ENCODE measurements at regions of chr7 and their contacts with region 1.

Region 1: DNA sequence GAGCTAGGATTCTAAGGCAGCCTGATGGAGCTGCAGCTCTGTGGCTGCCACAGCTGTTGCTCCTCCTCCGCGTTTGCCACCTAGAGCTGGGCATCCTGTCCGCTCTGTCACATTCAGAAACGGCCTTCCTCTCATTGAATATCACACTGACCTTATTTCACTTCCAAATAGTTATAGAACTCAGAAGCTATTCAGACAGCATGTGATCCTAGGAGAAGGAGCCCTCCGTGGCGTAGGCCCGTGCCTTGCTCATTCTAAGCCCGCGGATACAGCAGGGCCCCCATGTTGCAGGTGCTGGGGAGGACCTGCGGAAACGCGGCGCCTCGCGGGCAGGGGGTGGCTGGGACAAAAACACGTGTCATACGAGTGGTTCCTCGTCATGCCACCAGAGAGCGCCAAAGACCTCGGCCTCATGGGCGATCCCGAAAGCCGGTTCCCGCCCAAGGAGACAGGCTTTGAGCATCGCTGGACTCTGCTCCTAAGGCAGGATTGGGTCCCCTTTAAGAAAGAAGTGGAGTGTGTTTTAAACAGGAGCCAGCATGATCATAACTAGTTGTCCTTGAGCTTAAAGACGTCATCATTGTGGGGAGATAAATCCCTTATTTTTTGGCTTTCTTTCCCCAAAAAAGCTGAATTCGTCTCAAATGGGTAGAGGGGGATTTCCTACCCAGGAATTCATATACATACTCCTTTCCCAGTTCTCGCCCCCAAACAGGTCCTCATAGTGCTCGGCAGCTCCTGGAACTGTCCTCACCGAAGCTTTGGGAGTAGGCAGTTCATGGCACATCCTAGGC is 17.9 kb upstream of the FIGNL1 start:
- DNase-seq: peak; percentile 72 to 78 (median 74)
- H3K4me3 ChIP-seq: peak overlapping the region in 1 of 2 donors; percentile 6
- H3K4me3 Mint-ChIP-seq: peak overlapping the region; percentile 18 to 79 (median 64)
- H3K27ac ChIP-seq: no peak overlapping the region
- H3K27ac Mint-ChIP-seq: peak overlapping the region in 5 of 7 donors; percentile 55 to 88 (median 81)
- H3K4me1 ChIP-seq: peaks cover 10% of the 10 kb centered on the region
- H3K4me1 Mint-ChIP-seq: peaks cover 2 to 14% (median 9%) of the 10 kb centered on the region in 4 donors
- H3K27me3 ChIP-seq: no peaks in the 10 kb centered on the region
- H3K27me3 Mint-ChIP-seq: peaks cover 0 to 3% of the 10 kb centered on the region in 2 donors

Region 2: GRCh38 chr7:49852619-49853462 is 615.2 kb before region 1 on chr7:
- CTCF ChIA-PET with region 1: no interaction called
- POLR2A ChIA-PET with region 1: no interaction called
- intact Hi-C with region 1: no loop called
- DNase-seq: no peak
- H3K4me3 ChIP-seq: no peak overlapping the region
- H3K4me3 Mint-ChIP-seq: no peak overlapping the region
- H3K27ac ChIP-seq: no peak overlapping the region
- H3K27ac Mint-ChIP-seq: no peak overlapping the region
- H3K4me1 ChIP-seq: no peaks in the 10 kb centered on the region
- H3K4me1 Mint-ChIP-seq: no peaks in the 10 kb centered on the region
- H3K27me3 ChIP-seq: no peaks in the 10 kb centered on the region
- H3K27me3 Mint-ChIP-seq: peaks cover 0 to 1% of the 10 kb centered on the region in 2 donors

Region 3: GRCh38 chr7:50142425-50143017 is 325.5 kb before region 1 on chr7:
- CTCF ChIA-PET with region 1: interaction called, 5 read pairs
- POLR2A ChIA-PET with region 1: no interaction called
- intact Hi-C with region 1: loop called (anchors 1 kb)
- DNase-seq: peak in 4 of 5 donors; percentile 57 to 63 (median 60)
- H3K4me3 ChIP-seq: no peak overlapping the region
- H3K4me3 Mint-ChIP-seq: peak overlapping the region; percentile 3 to 77 (median 49)
- H3K27ac ChIP-seq: no peak overlapping the region
- H3K27ac Mint-ChIP-seq: peak overlapping the region in 6 of 7 donors; percentile 0 to 93 (median 36)
- H3K4me1 ChIP-seq: peaks cover 26% of the 10 kb centered on the region
- H3K4me1 Mint-ChIP-seq: peaks cover 11 to 25% (median 18%) of the 10 kb centered on the region in 4 donors
- H3K27me3 ChIP-seq: no peaks in the 10 kb centered on the region
- H3K27me3 Mint-ChIP-seq: peaks cover 0 to 2% of the 10 kb centered on the region in 2 donors

Region 4: GRCh38 chr7:50455658-50456057 is 12.4 kb before region 1 on chr7:
- CTCF ChIA-PET with region 1: interaction called, 18 read pairs
- POLR2A ChIA-PET with region 1: interaction called, 3 read pairs
- intact Hi-C with region 1: loop called (anchors 1 kb)
- DNase-seq: no peak
- H3K4me3 ChIP-seq: no peak overlapping the region
- H3K4me3 Mint-ChIP-seq: no peak overlapping the region
- H3K27ac ChIP-seq: no peak overlapping the region
- H3K27ac Mint-ChIP-seq: peak overlapping the region in 2 of 7 donors; percentile 5 to 62
- H3K4me1 ChIP-seq: peaks cover 8% of the 10 kb centered on the region
- H3K4me1 Mint-ChIP-seq: peaks cover 5 to 8% (median 7%) of the 10 kb centered on the region in 4 donors
- H3K27me3 ChIP-seq: no peaks in the 10 kb centered on the region
- H3K27me3 Mint-ChIP-seq: peaks cover 0 to 2% of the 10 kb centered on the region in 2 donors

Region 5: DNA sequence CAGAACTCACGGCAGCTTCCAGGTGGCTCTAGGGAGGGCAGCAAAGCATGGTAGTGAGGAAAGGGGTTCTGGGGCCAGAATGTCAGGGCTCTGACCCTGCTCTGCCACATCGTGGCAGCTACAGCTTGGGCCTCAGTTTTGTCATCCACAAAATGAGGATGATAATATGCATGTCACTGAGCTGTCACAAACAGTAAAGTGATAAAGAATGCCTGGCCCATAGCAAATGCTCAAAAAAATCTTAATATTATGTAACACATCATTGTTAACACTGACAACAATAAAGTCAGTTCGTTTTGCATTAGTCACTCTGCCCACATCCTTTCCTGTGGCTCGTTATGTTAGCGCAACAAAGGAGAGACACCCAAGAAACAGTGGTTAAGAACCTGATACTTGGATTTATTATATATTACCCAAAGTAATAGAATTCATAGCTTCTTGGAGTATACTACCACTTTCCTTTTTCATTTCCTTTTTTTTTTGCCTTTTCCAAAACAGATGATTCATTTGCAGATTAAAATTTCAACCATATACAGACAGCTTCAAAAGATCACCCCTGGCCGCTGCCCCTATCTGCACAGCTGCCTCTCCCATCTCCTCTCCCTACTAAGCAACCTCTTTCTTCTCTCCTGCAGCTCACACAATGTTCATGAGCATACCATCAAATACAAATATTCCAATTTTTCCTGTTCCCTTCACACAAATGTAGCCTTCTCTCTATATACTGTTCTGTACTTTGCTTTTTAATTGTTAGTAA is 142.7 kb after region 1 on chr7:
- CTCF ChIA-PET with region 1: interaction called, 21 read pairs
- POLR2A ChIA-PET with region 1: no interaction called
- intact Hi-C with region 1: loop called (anchors 1 kb)
- DNase-seq: peak; percentile 61 to 79 (median 74)
- H3K4me3 ChIP-seq: peak overlapping the region in 1 of 2 donors; percentile 9
- H3K4me3 Mint-ChIP-seq: peak overlapping the region in 7 of 8 donors; percentile 17 to 76 (median 63)
- H3K27ac ChIP-seq: peak overlapping the region; percentile 31
- H3K27ac Mint-ChIP-seq: peak overlapping the region; percentile 54 to 94 (median 86)
- H3K4me1 ChIP-seq: peaks cover 48% of the 10 kb centered on the region
- H3K4me1 Mint-ChIP-seq: peaks cover 34 to 54% (median 45%) of the 10 kb centered on the region in 4 donors
- H3K27me3 ChIP-seq: no peaks in the 10 kb centered on the region
- H3K27me3 Mint-ChIP-seq: no peaks in the 10 kb centered on the region

Region 6: GRCh38 chr7:50679218-50680007 is 211.4 kb after region 1 on chr7:
- CTCF ChIA-PET with region 1: interaction called, 174 read pairs
- POLR2A ChIA-PET with region 1: no interaction called
- intact Hi-C with region 1: no loop called
- DNase-seq: peak in 4 of 5 donors; percentile 51 to 64 (median 58)
- H3K4me3 ChIP-seq: no peak overlapping the region
- H3K4me3 Mint-ChIP-seq: no peak overlapping the region
- H3K27ac ChIP-seq: no peak overlapping the region
- H3K27ac Mint-ChIP-seq: no peak overlapping the region
- H3K4me1 ChIP-seq: no peaks in the 10 kb centered on the region
- H3K4me1 Mint-ChIP-seq: peaks cover 0 to 3% (median under 1%) of the 10 kb centered on the region in 4 donors
- H3K27me3 ChIP-seq: no peaks in the 10 kb centered on the region
- H3K27me3 Mint-ChIP-seq: peaks cover 0 to under 1% of the 10 kb centered on the region in 2 donors

Region 7: DNA sequence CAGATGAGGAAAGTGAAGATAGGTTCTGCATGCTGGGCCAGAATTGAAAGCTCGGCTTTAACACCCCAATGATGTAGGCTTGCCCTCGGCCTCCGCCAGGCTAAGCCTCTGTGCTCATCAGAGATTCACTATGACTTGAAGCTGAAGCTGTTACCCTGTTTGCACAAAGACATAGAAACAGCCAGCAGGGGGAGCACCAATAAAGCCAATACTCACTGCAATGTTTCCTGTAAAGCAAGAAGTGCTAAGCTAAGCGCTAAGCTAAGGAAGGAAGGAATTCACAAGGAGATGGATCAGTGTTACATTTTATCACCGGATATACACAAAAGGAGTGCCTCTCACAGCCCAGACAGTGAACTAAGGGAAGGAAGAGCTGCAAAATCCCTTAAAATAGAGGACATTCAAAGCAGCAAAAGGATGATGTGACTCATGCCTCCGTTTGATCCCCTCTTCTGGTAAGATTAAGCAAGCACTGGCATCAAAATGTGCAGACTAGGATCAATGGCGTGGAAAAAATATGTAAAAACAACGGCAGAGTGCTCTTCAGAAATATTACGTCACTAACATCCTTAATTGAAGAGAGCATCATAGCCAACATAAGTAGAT is 694.8 kb after region 1 on chr7:
- CTCF ChIA-PET with region 1: interaction called, 66 read pairs
- POLR2A ChIA-PET with region 1: no interaction called
- intact Hi-C with region 1: loop called (anchors 1 kb)
- DNase-seq: peak; percentile 36 to 55 (median 52)
- H3K4me3 ChIP-seq: no peak overlapping the region
- H3K4me3 Mint-ChIP-seq: peak overlapping the region in 1 of 8 donors; percentile 2
- H3K27ac ChIP-seq: no peak overlapping the region
- H3K27ac Mint-ChIP-seq: peak overlapping the region in 1 of 7 donors; percentile 11
- H3K4me1 ChIP-seq: peaks cover 6% of the 10 kb centered on the region
- H3K4me1 Mint-ChIP-seq: peaks cover 0 to 8% (median 1%) of the 10 kb centered on the region in 4 donors
- H3K27me3 ChIP-seq: no peaks in the 10 kb centered on the region
- H3K27me3 Mint-ChIP-seq: peaks cover 14 to 19% of the 10 kb centered on the region in 2 donors